T-cell (primary cell): ENCODE measurements at regions of chr15 and their contacts with region 1.

Region 1: GRCh38 chr15:85646538-85647091 is 148.1 kb downstream of the KLHL25 start:
- DNase-seq: peak in 21 of 35 experiments; percentile 3 to 78 (median 24)
- ATAC-seq: peak; percentile 63 to 80 (median 70)
- H3K4me3 ChIP-seq: no peak overlapping the region
- H3K4me3 Mint-ChIP-seq: peak overlapping the region in 1 of 3 donors; percentile 12
- H3K27ac ChIP-seq: peak overlapping the region; percentile 90
- H3K27ac Mint-ChIP-seq: peak overlapping the region; percentile 86 to 89
- H3K4me1 ChIP-seq: peaks cover 11 to 36% of the 10 kb centered on the region in 2 experiments
- H3K4me1 Mint-ChIP-seq: peaks cover 38 to 55% (median 52%) of the 10 kb centered on the region in 3 donors
- H3K27me3 ChIP-seq: no peaks in the 10 kb centered on the region
- H3K27me3 Mint-ChIP-seq: no peaks in the 10 kb centered on the region

Region 2: GRCh38 chr15:84616235-84616634 is 1030.4 kb before region 1 on chr15:
- CTCF ChIA-PET with region 1: no interaction called
- POLR2A ChIA-PET with region 1: interaction called in 1 of 2 experiments, 19 read pairs
- DNase-seq: no peak
- ATAC-seq: no peak
- H3K4me3 ChIP-seq: no peak overlapping the region
- H3K4me3 Mint-ChIP-seq: no peak overlapping the region
- H3K27ac ChIP-seq: no peak overlapping the region
- H3K27ac Mint-ChIP-seq: no peak overlapping the region
- H3K4me1 ChIP-seq: no peaks in the 10 kb centered on the region
- H3K4me1 Mint-ChIP-seq: peaks cover 0 to 11% (median 8%) of the 10 kb centered on the region in 3 donors
- H3K27me3 ChIP-seq: no peaks in the 10 kb centered on the region
- H3K27me3 Mint-ChIP-seq: no peaks in the 10 kb centered on the region

Region 3: DNA sequence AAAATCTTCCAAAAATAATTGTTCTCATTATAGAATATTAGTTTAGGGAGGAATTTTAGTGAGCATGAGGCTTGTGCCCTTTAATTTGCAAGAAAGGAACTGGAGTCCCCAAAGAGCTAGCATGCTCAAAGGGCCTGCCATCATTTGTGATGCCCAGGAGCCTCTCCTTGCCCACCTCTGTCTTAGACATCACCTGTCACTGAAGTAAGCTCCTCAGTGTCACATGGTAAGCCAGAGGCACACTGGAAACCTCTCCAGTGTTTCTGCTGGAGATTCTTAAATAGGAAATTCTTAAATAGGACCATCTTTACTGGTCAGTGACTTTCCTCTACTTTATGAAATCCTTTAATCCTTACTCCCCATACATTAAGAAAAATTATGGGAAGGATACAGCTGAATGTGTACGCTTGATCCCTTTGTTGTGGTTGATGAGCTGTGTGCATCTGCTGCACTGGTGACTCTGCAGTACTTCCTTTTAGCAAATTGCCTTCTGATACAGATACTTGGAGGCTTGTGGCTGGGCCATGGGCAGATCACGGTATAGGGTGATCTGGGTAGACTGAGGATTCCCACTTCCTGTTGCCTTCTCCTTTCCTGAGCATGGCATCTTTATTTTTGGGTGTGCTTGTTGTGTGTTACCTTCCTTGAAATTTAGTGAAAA is 49.3 kb before region 1 on chr15:
- CTCF ChIA-PET with region 1: no interaction called
- POLR2A ChIA-PET with region 1: no interaction called
- DNase-seq: peak in 6 of 35 experiments; percentile 16 to 59 (median 20)
- ATAC-seq: peak; percentile 89 to 98 (median 92)
- H3K4me3 ChIP-seq: no peak overlapping the region
- H3K4me3 Mint-ChIP-seq: peak overlapping the region in 2 of 3 donors; percentile 21 to 50
- H3K27ac ChIP-seq: peak overlapping the region; percentile 26
- H3K27ac Mint-ChIP-seq: peak overlapping the region; percentile 81 to 92
- H3K4me1 ChIP-seq: peaks cover 10 to 13% of the 10 kb centered on the region in 2 experiments
- H3K4me1 Mint-ChIP-seq: peaks cover 47 to 56% (median 55%) of the 10 kb centered on the region in 3 donors
- H3K27me3 ChIP-seq: no peaks in the 10 kb centered on the region
- H3K27me3 Mint-ChIP-seq: no peaks in the 10 kb centered on the region

Region 4: DNA sequence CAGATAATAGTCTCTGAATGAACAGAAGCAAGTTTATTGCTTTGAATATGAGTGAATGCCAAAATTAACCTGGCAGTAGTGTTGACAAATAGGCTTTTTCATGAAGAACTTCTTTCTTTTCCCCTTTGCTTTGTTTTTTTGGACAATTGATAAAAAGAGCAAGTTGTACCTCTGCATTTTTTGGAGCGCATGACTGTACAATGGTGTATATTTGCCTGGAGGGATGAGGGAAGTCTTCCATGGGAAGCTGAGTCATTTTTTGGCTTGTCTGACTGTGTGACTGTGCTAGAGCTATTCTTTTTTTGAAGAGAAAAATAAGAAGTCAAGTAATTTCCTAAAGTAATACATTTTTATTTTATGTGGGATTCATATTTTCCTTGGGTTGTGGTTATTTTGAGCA is 38.8 kb before region 1 on chr15:
- CTCF ChIA-PET with region 1: interaction called in 1 of 2 experiments, 3 read pairs
- POLR2A ChIA-PET with region 1: interaction called in 1 of 2 experiments, 10 read pairs
- DNase-seq: no peak
- ATAC-seq: no peak
- H3K4me3 ChIP-seq: no peak overlapping the region
- H3K4me3 Mint-ChIP-seq: no peak overlapping the region
- H3K27ac ChIP-seq: no peak overlapping the region
- H3K27ac Mint-ChIP-seq: peak overlapping the region; percentile 76 to 80
- H3K4me1 ChIP-seq: no peaks in the 10 kb centered on the region
- H3K4me1 Mint-ChIP-seq: peaks cover 6 to 17% (median 16%) of the 10 kb centered on the region in 3 donors
- H3K27me3 ChIP-seq: no peaks in the 10 kb centered on the region
- H3K27me3 Mint-ChIP-seq: no peaks in the 10 kb centered on the region

Region 5: DNA sequence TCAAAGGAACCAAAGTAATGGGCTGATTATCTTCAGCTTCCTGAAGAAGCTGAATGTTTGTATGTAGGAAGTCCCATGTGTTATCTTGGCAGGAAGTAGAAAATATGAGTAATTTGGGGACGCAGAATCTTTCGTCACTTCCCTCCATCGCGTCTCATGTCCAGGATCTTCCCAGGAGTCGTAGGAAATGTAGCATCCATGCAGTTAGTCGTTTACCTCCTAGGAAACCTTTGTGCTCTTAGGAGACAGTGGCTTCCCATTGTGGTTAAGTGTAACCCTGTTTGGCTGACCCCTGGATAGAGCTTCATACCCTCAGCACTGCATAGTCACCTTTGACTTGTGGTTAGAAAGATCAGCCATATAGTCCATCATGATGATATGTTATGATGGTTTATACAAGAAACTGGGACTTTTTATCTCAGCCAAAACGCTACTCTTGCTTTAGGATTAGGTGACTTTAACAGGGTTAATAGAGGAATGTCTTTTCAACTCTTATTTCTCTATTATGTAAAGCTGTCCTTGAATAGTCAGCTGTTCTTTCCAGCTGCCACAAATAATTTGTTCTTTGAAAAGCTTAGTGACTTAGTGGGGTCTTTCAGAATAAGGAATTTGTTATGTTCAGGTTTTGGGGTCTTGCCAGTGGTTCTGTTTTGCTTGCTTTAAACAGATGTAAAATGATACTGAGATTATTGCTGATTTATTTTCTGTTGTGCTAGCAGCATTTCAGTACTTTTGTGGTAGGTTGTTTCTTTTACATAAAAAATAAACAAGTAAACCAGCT is 55.9 kb after region 1 on chr15:
- CTCF ChIA-PET with region 1: interaction called in 1 of 2 experiments, 3 read pairs
- POLR2A ChIA-PET with region 1: interaction called in 1 of 2 experiments, 12 read pairs
- DNase-seq: peak in 6 of 35 experiments; percentile 18 to 77 (median 26)
- ATAC-seq: peak; percentile 15 to 50 (median 46)
- H3K4me3 ChIP-seq: peak overlapping the region; percentile 32 to 36
- H3K4me3 Mint-ChIP-seq: peak overlapping the region; percentile 67 to 80 (median 74)
- H3K27ac ChIP-seq: peak overlapping the region; percentile 91
- H3K27ac Mint-ChIP-seq: peak overlapping the region; percentile 89 to 98
- H3K4me1 ChIP-seq: peaks cover 41 to 67% of the 10 kb centered on the region in 2 experiments
- H3K4me1 Mint-ChIP-seq: peaks cover 74 to 86% (median 84%) of the 10 kb centered on the region in 3 donors
- H3K27me3 ChIP-seq: no peaks in the 10 kb centered on the region
- H3K27me3 Mint-ChIP-seq: no peaks in the 10 kb centered on the region